ENCODE measurements at regions of chr12 and their contacts with region 1.

Region 1: GRCh38 chr12:50111693-50112455 is at the start of gene COX14:
- DNase-seq: peak; percentile 100
- ATAC-seq: peak; percentile 90
- H3K4me3 Mint-ChIP-seq: peak within 1 kb of the TSS; percentile 100
- H3K27ac Mint-ChIP-seq: peak within 1 kb of the TSS; percentile 99
- H3K4me1 Mint-ChIP-seq: peaks cover 36% of the 10 kb centered on the region
- H3K27me3 Mint-ChIP-seq: no peaks in the 10 kb centered on the region
- total RNA-seq, gene COX14: 55.1 to 64.5 TPM

Region 2: DNA sequence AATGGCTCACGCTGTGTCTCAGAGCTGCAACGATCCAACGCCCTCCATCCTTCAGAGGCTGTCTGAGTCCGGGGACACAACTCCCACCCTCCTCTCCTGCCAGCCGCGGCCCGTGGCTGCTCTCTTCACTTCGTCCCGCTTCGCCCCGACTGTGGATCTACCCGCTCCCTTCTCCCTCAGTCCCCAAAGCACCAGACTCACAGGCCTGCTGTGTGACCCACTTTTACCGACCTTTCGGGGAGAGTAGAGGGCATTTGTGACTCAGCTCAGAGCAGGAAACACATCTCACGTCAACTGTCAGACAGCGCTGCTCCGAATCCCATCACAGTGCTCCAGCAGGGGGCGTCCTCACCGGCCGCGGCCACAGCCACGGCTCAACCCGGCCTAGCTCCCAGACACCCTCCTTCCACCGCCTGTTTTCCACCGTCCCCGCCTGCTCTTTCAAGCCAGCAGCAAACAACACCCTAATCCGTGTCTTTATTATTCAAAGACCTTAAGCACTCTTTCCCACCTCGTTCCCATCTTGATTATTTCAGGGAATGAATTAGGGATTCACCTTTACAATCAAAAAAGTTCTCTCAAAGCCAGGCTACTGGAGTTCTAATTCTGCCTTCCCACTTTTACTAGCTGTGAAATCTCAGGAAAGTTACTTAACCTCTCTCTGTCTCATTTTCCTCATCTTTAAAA is 166.3 kb before region 1 on chr12:
- CTCF ChIA-PET with region 1: interaction called, 10 read pairs
- DNase-seq: peak; percentile 90
- ATAC-seq: peak; percentile 99
- H3K4me3 Mint-ChIP-seq: peak overlapping the region; percentile 66
- H3K27ac Mint-ChIP-seq: peak overlapping the region; percentile 87
- H3K4me1 Mint-ChIP-seq: peaks cover 25% of the 10 kb centered on the region
- H3K27me3 Mint-ChIP-seq: no peaks in the 10 kb centered on the region

Region 3: GRCh38 chr12:50055831-50056638 is 55.8 kb before region 1 on chr12:
- CTCF ChIA-PET with region 1: interaction called, 10 read pairs
- DNase-seq: peak; percentile 72
- ATAC-seq: peak; percentile 34
- H3K4me3 Mint-ChIP-seq: peak overlapping the region; percentile 39
- H3K27ac Mint-ChIP-seq: no peak overlapping the region
- H3K4me1 Mint-ChIP-seq: peaks cover 42% of the 10 kb centered on the region
- H3K27me3 Mint-ChIP-seq: peaks cover 36% of the 10 kb centered on the region

Region 4: DNA sequence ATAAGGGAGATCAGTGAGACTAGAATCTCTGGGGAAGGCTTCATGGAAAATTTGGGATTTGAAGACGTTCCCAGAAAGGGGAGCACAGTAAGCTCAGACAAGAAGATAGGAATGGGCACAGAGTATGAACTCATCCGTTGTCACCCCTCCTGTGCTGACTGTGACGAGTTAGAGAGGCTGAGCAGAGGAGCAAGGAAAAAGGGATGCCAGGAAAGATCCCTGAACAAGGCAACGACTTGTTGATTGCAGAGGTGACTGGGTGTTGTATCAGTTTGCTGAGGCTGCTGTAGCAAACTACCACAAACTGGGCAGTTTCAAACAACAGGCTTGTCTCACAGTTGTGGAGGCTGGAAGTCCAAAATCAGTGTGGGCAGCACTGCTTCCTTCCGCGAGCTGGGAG is 13.9 kb before region 1 on chr12:
- CTCF ChIA-PET with region 1: interaction called, 42 read pairs
- DNase-seq: no peak
- ATAC-seq: no peak
- H3K4me3 Mint-ChIP-seq: no peak overlapping the region
- H3K27ac Mint-ChIP-seq: no peak overlapping the region
- H3K4me1 Mint-ChIP-seq: no peaks in the 10 kb centered on the region
- H3K27me3 Mint-ChIP-seq: no peaks in the 10 kb centered on the region

Region 5: GRCh38 chr12:50162230-50162629 is 50.4 kb after region 1 on chr12:
- CTCF ChIA-PET with region 1: interaction called, 52 read pairs
- DNase-seq: no peak
- ATAC-seq: no peak
- H3K4me3 Mint-ChIP-seq: no peak overlapping the region
- H3K27ac Mint-ChIP-seq: no peak overlapping the region
- H3K4me1 Mint-ChIP-seq: peaks cover 35% of the 10 kb centered on the region
- H3K27me3 Mint-ChIP-seq: no peaks in the 10 kb centered on the region

Region 6: GRCh38 chr12:50187084-50187900 is 75.4 kb after region 1 on chr12:
- CTCF ChIA-PET with region 1: interaction called, 26 read pairs
- DNase-seq: peak; percentile 56
- ATAC-seq: peak; percentile 69
- H3K4me3 Mint-ChIP-seq: peak overlapping the region; percentile 26
- H3K27ac Mint-ChIP-seq: peak overlapping the region; percentile 90
- H3K4me1 Mint-ChIP-seq: peaks cover 61% of the 10 kb centered on the region
- H3K27me3 Mint-ChIP-seq: no peaks in the 10 kb centered on the region

Region 7: DNA sequence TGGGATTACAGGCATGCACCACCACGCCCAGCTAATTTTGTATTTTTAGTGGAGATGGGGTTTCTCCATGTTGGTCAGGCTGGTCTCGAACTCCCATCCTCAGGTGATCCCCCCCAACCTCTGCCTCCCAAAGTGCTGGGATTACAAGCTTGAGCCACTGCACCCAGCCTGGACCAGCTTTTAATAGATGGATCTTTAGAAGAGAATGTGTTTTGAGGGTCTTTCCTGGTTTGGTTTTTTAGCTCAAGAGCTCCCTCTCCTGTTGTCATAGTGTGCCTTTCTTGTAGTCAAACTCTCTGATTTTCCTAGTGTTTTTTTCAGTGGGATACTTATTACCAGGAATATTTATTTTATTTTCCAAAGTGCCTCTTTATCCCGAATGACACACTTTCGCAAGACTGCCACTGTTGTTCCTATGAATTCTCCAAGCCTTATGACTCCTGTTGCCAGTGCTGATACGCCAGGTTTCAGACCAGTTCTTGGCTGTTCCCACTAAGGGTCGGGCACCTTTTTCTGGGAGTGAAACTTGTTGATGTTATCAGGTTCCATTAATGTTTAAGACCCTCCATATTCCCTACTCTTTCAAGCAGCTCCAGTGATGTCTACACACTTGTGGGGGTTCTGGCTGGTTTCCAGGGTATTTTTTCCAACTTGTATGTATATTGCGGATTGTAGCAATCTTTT is 202.9 kb after region 1 on chr12:
- CTCF ChIA-PET with region 1: interaction called, 16 read pairs
- DNase-seq: no peak
- ATAC-seq: no peak
- H3K4me3 Mint-ChIP-seq: no peak overlapping the region
- H3K27ac Mint-ChIP-seq: no peak overlapping the region
- H3K4me1 Mint-ChIP-seq: peaks cover 5% of the 10 kb centered on the region
- H3K27me3 Mint-ChIP-seq: no peaks in the 10 kb centered on the region

Measured in activated CD8-positive, alpha-beta memory T cell treated with anti-CD3 and anti-CD28 coated beads, Interleukin-2, amount 10 ng/mL, durations not matched to agents 7 days and 5 days (primary cell).